Activated CD4-positive, alpha-beta T cell treated with anti-CD3 and anti-CD28 coated beads for 36 hours (primary cell): ENCODE measurements at regions of chr1 and their contacts with region 1.

Region 1: GRCh38 chr1:40385437-40386358 is 12.2 kb downstream of the SMAP2 start:
- DNase-seq: peak; percentile 77
- ATAC-seq: peak; percentile 63
- H3K4me3 Mint-ChIP-seq: peak overlapping the region; percentile 74
- H3K27ac Mint-ChIP-seq: peak overlapping the region; percentile 100
- H3K4me1 Mint-ChIP-seq: peaks cover 94% of the 10 kb centered on the region
- H3K27me3 Mint-ChIP-seq: no peaks in the 10 kb centered on the region

Region 2: GRCh38 chr1:39575191-39576015 is 810.3 kb before region 1 on chr1:
- CTCF ChIA-PET with region 1: no interaction called
- POLR2A ChIA-PET with region 1: no interaction called
- intact Hi-C with region 1: loop called in 1 of 2 experiments (anchors 10 kb)
- DNase-seq: peak; percentile 69
- ATAC-seq: peak; percentile 40
- H3K4me3 Mint-ChIP-seq: peak overlapping the region; percentile 90
- H3K27ac Mint-ChIP-seq: peak overlapping the region; percentile 90
- H3K4me1 Mint-ChIP-seq: peaks cover 42% of the 10 kb centered on the region
- H3K27me3 Mint-ChIP-seq: no peaks in the 10 kb centered on the region

Region 3: DNA sequence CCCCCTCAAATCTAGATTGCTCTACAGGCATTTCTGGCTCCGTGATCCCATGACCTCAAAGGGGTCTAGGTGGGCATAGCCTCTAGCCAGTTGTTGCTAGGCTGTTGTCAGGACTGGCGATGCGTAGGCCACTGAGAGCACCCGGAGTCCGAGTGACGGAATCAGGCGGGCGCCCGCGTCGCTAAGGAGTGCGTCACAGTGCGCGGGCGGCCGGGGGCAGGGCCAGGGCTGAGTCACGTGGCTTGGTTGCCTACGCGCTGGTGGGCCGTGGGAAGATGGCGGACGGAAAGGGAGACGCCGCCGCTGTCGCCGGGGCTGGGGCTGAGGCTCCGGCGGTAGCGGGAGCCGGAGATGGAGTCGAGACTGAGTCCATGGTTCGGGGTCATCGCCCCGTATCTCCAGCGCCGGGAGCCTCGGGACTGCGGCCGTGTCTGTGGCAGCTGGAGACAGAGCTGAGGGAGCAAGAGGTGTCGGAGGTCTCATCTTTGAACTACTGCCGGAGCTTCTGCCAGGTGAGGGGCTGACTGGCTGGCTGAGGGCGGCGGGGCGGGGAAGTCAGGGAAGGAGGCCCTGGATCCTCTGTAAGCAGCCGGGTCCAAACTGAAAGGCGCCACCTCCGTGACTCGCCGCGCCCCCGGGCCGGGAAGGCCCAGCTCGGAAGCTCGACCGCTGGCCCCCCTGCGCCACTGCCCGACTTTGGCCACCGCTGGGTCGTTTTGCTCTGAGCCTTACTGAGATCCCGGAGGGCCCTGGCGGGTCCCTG is 224.4 kb before region 1 on chr1 and contains the start of gene RLF:
- CTCF ChIA-PET with region 1: no interaction called
- POLR2A ChIA-PET with region 1: interaction called, 13 read pairs
- intact Hi-C with region 1: loop called (anchors 1 to 5 kb)
- DNase-seq: peak; percentile 98
- ATAC-seq: peak; percentile 81
- H3K4me3 Mint-ChIP-seq: no peak within 1 kb of the TSS
- H3K27ac Mint-ChIP-seq: no peak within 1 kb of the TSS
- H3K4me1 Mint-ChIP-seq: peaks cover 4% of the 10 kb centered on the region
- H3K27me3 Mint-ChIP-seq: no peaks in the 10 kb centered on the region
- total RNA-seq, gene RLF: 20.1 to 20.9 TPM

Region 4: DNA sequence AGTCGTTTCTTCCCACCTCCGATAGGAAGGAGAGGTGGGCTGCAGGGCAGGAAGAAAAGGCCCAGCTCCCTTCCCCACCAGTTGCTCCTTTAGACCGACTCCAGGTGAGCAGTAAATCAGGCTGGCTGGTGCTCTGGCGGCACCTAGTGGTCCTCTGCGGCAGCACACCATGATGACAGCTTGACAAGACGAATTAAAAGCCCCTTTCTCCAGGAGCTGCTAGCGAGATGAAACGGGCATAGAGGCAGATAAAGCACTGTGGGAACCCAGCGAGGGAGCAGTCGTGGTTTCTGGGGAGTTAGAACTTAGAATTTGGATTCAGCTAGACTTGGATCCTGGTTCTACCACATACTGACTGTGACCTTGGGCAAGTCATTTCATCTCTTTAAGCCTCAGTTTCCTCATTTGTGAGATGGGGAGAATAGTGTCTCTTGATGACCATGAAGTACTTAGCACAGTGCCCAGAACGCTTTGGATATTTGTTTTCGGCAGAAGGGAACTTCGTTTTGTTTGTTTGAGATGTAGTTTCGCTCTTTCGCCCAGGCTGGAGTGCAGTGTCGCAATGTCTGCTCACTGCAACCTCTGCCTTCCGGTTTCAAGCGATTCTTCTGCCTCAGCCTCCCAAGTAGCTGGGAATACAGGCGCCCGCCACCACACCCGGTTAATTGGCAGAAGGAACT is 46.8 kb before region 1 on chr1:
- CTCF ChIA-PET with region 1: interaction called, 12 read pairs
- POLR2A ChIA-PET with region 1: interaction called, 4 read pairs
- intact Hi-C with region 1: loop called in 1 of 2 experiments (anchors 1 kb)
- DNase-seq: peak; percentile 94
- ATAC-seq: peak; percentile 85
- H3K4me3 Mint-ChIP-seq: peak overlapping the region; percentile 14
- H3K27ac Mint-ChIP-seq: peak overlapping the region; percentile 69
- H3K4me1 Mint-ChIP-seq: peaks cover 42% of the 10 kb centered on the region
- H3K27me3 Mint-ChIP-seq: no peaks in the 10 kb centered on the region

Region 5: GRCh38 chr1:40404670-40405462 is 19.2 kb after region 1 on chr1:
- CTCF ChIA-PET with region 1: interaction called, 54 read pairs
- POLR2A ChIA-PET with region 1: interaction called, 39 read pairs
- intact Hi-C with region 1: loop called (anchors 1 kb)
- DNase-seq: peak; percentile 61
- ATAC-seq: peak; percentile 34
- H3K4me3 Mint-ChIP-seq: peak overlapping the region; percentile 3
- H3K27ac Mint-ChIP-seq: peak overlapping the region; percentile 91
- H3K4me1 Mint-ChIP-seq: peaks cover 64% of the 10 kb centered on the region
- H3K27me3 Mint-ChIP-seq: no peaks in the 10 kb centered on the region